Ascending aorta (tissue), 2 donors: ENCODE measurements at regions of chr13 and their contacts with region 1.

Region 1: GRCh38 chr13:75219479-75220237 is 262.3 kb downstream of the TBC1D4 start:
- DNase-seq: peak in 1 of 2 donors; percentile 83
- H3K4me3 ChIP-seq: peak overlapping the region in 1 of 2 donors; percentile 18
- H3K27ac ChIP-seq: no peak overlapping the region
- H3K4me1 ChIP-seq: peaks cover 0 to 3% of the 10 kb centered on the region in 2 donors
- H3K27me3 ChIP-seq: no peaks in the 10 kb centered on the region
- CTCF ChIP-seq: peak; percentile 79 to 98 (median 93)

Region 2: GRCh38 chr13:73754727-73755292 is 1464.8 kb before region 1 on chr13:
- intact Hi-C with region 1: loop called (anchors 5 kb)
- DNase-seq: no peak
- H3K4me3 ChIP-seq: no peak overlapping the region
- H3K27ac ChIP-seq: no peak overlapping the region
- H3K4me1 ChIP-seq: no peaks in the 10 kb centered on the region
- H3K27me3 ChIP-seq: no peaks in the 10 kb centered on the region
- CTCF ChIP-seq: peak; percentile 25 to 71 (median 58)

Region 3: GRCh38 chr13:74593688-74594087 is 626.0 kb before region 1 on chr13:
- intact Hi-C with region 1: loop called (anchors 5 kb)
- DNase-seq: no peak
- H3K4me3 ChIP-seq: no peak overlapping the region
- H3K27ac ChIP-seq: no peak overlapping the region
- H3K4me1 ChIP-seq: no peaks in the 10 kb centered on the region
- H3K27me3 ChIP-seq: no peaks in the 10 kb centered on the region
- CTCF ChIP-seq: no peak

Region 4: DNA sequence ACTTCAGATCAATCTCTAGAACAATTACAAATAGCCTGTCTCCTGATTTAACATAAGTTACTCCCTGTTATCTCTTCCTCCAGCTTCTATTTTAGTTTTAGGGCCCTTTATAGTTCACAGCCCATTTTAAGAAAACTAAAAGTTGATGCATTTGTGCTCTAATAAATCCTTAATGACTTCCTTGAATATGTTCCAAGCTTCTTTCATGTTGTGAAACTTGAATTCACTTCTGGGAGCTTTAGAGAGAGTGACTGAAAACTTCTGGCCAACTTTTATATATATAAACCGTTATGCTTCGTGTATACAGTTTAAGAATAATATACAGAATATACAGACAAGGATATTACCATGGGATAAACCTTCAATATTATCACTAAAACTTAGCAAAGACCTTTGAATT is 104.5 kb before region 1 on chr13:
- intact Hi-C with region 1: no loop called
- DNase-seq: no peak
- H3K4me3 ChIP-seq: no peak overlapping the region
- H3K27ac ChIP-seq: no peak overlapping the region
- H3K4me1 ChIP-seq: no peaks in the 10 kb centered on the region
- H3K27me3 ChIP-seq: no peaks in the 10 kb centered on the region
- CTCF ChIP-seq: no peak

Region 5: DNA sequence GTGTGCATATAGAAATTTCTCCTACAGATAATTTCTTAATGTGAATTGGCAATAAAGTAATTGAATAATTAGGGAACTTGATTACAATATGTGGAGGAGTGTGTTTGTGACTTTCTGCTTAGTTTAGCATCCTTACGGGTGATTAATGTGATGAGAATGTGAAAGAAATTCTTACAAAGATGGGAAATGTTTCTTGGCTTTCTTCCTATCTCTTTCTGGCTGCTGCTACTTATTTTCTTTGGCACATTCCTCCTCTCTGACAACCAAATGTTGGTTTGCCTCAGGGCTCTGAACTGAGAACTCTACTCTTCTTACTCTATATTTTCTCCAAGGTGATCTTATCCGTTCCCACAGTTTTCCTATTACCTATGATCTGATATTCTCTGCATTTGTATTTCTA is 37.8 kb before region 1 on chr13:
- intact Hi-C with region 1: no loop called
- DNase-seq: no peak
- H3K4me3 ChIP-seq: no peak overlapping the region
- H3K27ac ChIP-seq: no peak overlapping the region
- H3K4me1 ChIP-seq: no peaks in the 10 kb centered on the region
- H3K27me3 ChIP-seq: no peaks in the 10 kb centered on the region
- CTCF ChIP-seq: no peak